ENCODE measurements at regions of chr3 and their contacts with region 1.

Region 1: GRCh38 chr3:64977291-64978100 is 289.7 kb upstream of the ADAMTS9 start:
- DNase-seq: peak; percentile 78 to 95
- H3K4me3 ChIP-seq: peak overlapping the region; percentile 37
- H3K27ac ChIP-seq: peak overlapping the region; percentile 99
- H3K4me1 ChIP-seq: peaks cover 30% of the 10 kb centered on the region
- H3K27me3 ChIP-seq: no peaks in the 10 kb centered on the region
- CTCF ChIP-seq: no peak

Region 2: DNA sequence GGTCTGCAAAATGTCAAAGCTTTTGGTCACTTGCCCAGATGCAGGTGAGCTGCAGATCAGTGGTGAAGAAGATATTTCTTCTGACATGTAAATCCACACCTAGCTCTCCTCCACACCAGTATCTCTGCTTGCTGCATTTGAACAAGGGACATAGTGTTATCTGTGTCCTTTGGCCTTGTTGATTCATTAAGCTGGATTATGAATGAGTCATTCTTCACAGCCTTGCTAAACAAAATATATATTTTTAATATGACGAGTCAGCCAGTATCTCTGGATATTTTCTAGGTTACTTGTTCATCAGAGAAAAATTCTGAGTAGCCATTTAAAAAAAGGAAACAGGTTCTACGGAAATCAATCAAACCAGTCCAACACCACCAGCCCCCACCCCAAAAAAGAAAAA is 99.1 kb before region 1 on chr3:
- CTCF ChIA-PET with region 1: no interaction called
- POLR2A ChIA-PET with region 1: no interaction called
- intact Hi-C with region 1: loop called (anchors 1 kb)
- DNase-seq: peak; percentile 14 to 84
- H3K4me3 ChIP-seq: peak overlapping the region; percentile 6; the same call in 1 of the 2 replicates
- H3K27ac ChIP-seq: peak overlapping the region; percentile 78
- H3K4me1 ChIP-seq: peaks cover 21% of the 10 kb centered on the region
- H3K27me3 ChIP-seq: no peaks in the 10 kb centered on the region
- CTCF ChIP-seq: no peak

Region 3: GRCh38 chr3:64928697-64929096 is 48.8 kb before region 1 on chr3:
- CTCF ChIA-PET with region 1: no interaction called
- POLR2A ChIA-PET with region 1: no interaction called
- intact Hi-C with region 1: no loop called
- DNase-seq: no peak
- H3K4me3 ChIP-seq: no peak overlapping the region
- H3K27ac ChIP-seq: no peak overlapping the region
- H3K4me1 ChIP-seq: no peaks in the 10 kb centered on the region
- H3K27me3 ChIP-seq: no peaks in the 10 kb centered on the region
- CTCF ChIP-seq: no peak

Region 4: GRCh38 chr3:65006300-65006739 is 28.8 kb after region 1 on chr3:
- CTCF ChIA-PET with region 1: interaction called, 5 read pairs
- POLR2A ChIA-PET with region 1: no interaction called
- intact Hi-C with region 1: loop called (anchors 1 kb)
- DNase-seq: peak in 1 of 2 experiments; percentile 58
- H3K4me3 ChIP-seq: no peak overlapping the region
- H3K27ac ChIP-seq: peak overlapping the region; percentile 48
- H3K4me1 ChIP-seq: peaks cover 18% of the 10 kb centered on the region
- H3K27me3 ChIP-seq: no peaks in the 10 kb centered on the region
- CTCF ChIP-seq: no peak

Region 5: GRCh38 chr3:65030847-65031558 is 53.5 kb after region 1 on chr3:
- CTCF ChIA-PET with region 1: no interaction called
- POLR2A ChIA-PET with region 1: interaction called, 4 read pairs
- intact Hi-C with region 1: loop called (anchors 1 kb)
- DNase-seq: peak; percentile 24 to 85
- H3K4me3 ChIP-seq: no peak overlapping the region
- H3K27ac ChIP-seq: no peak overlapping the region
- H3K4me1 ChIP-seq: peaks cover 15% of the 10 kb centered on the region; the same call in 1 of the 2 replicates
- H3K27me3 ChIP-seq: no peaks in the 10 kb centered on the region
- CTCF ChIP-seq: no peak

Region 6: GRCh38 chr3:65146179-65146578 is 168.7 kb after region 1 on chr3:
- CTCF ChIA-PET with region 1: no interaction called
- POLR2A ChIA-PET with region 1: interaction called, 5 read pairs
- intact Hi-C with region 1: loop called (anchors 1 kb)
- DNase-seq: peak; percentile 71 to 96
- H3K4me3 ChIP-seq: peak overlapping the region; percentile 33; the same call in 1 of the 2 replicates
- H3K27ac ChIP-seq: peak overlapping the region; percentile 98
- H3K4me1 ChIP-seq: peaks cover 18% of the 10 kb centered on the region
- H3K27me3 ChIP-seq: no peaks in the 10 kb centered on the region
- CTCF ChIP-seq: no peak

Region 7: DNA sequence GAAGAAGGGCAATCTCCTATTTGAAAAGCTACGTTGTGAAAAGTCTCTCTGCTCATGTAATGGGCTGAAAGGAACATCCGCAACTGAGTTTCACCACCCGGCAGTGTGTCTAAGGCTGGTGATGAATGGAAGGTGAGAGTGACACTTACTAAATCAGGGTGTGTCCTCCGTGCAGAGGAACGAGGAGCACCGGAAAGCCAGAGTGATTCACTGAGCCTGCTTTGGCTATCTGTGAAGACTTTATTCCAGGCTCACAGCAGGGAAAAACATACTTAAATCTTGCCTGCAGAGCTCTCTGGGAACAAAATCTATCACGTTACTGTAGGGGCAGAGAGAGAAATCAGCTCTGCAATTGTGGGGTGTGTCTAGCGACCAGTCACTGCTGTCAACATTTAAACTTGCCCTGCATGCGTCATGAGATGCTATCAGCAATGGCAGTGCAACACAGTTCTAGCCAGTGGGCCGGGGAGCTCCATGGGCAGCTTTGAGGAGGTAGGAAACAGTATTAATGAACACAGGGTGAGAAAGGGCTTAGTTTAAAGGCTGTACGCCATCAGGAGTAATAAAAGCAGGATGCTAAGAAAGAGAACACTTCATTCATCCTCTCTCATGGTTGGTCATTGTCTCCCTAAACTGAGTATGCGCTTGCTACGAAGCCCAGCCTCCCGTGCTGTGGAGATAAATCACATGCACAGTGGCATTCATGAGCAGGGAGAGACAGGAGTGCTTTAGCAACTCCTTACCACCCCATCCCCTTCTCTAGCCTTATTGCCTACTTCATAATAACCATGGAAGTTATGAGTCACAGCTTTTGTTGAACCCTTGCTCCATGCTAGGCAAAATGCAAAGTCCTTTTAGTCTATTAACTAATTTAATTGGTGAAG is 253.0 kb after region 1 on chr3:
- CTCF ChIA-PET with region 1: no interaction called
- POLR2A ChIA-PET with region 1: no interaction called
- intact Hi-C with region 1: no loop called
- DNase-seq: peak in 1 of 2 experiments; percentile 10
- H3K4me3 ChIP-seq: no peak overlapping the region
- H3K27ac ChIP-seq: no peak overlapping the region
- H3K4me1 ChIP-seq: no peaks in the 10 kb centered on the region
- H3K27me3 ChIP-seq: no peaks in the 10 kb centered on the region
- CTCF ChIP-seq: no peak

Region 8: GRCh38 chr3:65277798-65278197 is 300.3 kb after region 1 on chr3:
- CTCF ChIA-PET with region 1: no interaction called
- POLR2A ChIA-PET with region 1: no interaction called
- intact Hi-C with region 1: no loop called
- DNase-seq: no peak
- H3K4me3 ChIP-seq: no peak overlapping the region
- H3K27ac ChIP-seq: no peak overlapping the region
- H3K4me1 ChIP-seq: no peaks in the 10 kb centered on the region
- H3K27me3 ChIP-seq: no peaks in the 10 kb centered on the region
- CTCF ChIP-seq: no peak